MCF 10A (cell line): ENCODE measurements at regions of chr9 and their contacts with region 1.

Region 1: GRCh38 chr9:107243751-107244150 is 39.3 kb upstream of the RAD23B start:
- DNase-seq: peak; percentile 87
- H3K4me3 Mint-ChIP-seq: no peak overlapping the region
- H3K27ac Mint-ChIP-seq: peak overlapping the region; percentile 38
- H3K4me1 Mint-ChIP-seq: peaks cover 24% of the 10 kb centered on the region
- H3K27me3 Mint-ChIP-seq: no peaks in the 10 kb centered on the region
- CTCF ChIP-seq: no peak

Region 2: GRCh38 chr9:107299437-107299836 is 55.7 kb after region 1 on chr9:
- CTCF ChIA-PET with region 1: interaction called, 4 read pairs
- POLR2A ChIA-PET with region 1: interaction called, 3 read pairs
- intact Hi-C with region 1: loop called (anchors 1 kb)
- DNase-seq: no peak
- H3K4me3 Mint-ChIP-seq: no peak overlapping the region
- H3K27ac Mint-ChIP-seq: no peak overlapping the region
- H3K4me1 Mint-ChIP-seq: peaks cover 18% of the 10 kb centered on the region
- H3K27me3 Mint-ChIP-seq: no peaks in the 10 kb centered on the region
- CTCF ChIP-seq: peak; percentile 23